Esophagus muscularis mucosa (tissue), 4 donors: ENCODE measurements at regions of chr4 and their contacts with region 1.

Region 1: GRCh38 chr4:119729835-119730670 is 101.4 kb upstream of the PDE5A start:
- DNase-seq: no peak
- H3K4me3 ChIP-seq: no peak overlapping the region
- H3K27ac ChIP-seq: peak overlapping the region; percentile 35 to 84 (median 74)
- H3K4me1 ChIP-seq: peaks cover 49 to 86% (median 79%) of the 10 kb centered on the region in 4 donors
- H3K27me3 ChIP-seq: no peaks in the 10 kb centered on the region
- CTCF ChIP-seq: no peak
- EP300 ChIP-seq: no peak
- POLR2A ChIP-seq: no peak

Region 2: GRCh38 chr4:119080716-119081541 is 649.1 kb before region 1 on chr4:
- intact Hi-C with region 1: no loop called
- DNase-seq: no peak
- H3K4me3 ChIP-seq: no peak overlapping the region
- H3K27ac ChIP-seq: no peak overlapping the region
- H3K4me1 ChIP-seq: no peaks in the 10 kb centered on the region
- H3K27me3 ChIP-seq: no peaks in the 10 kb centered on the region
- CTCF ChIP-seq: no peak
- EP300 ChIP-seq: no peak
- POLR2A ChIP-seq: no peak

Region 3: GRCh38 chr4:119683518-119683917 is 46.5 kb before region 1 on chr4:
- intact Hi-C with region 1: loop called (anchors 5 kb)
- DNase-seq: no peak
- H3K4me3 ChIP-seq: no peak overlapping the region
- H3K27ac ChIP-seq: peak overlapping the region; percentile 48 to 74 (median 67)
- H3K4me1 ChIP-seq: peaks cover 0 to 63% (median 55%) of the 10 kb centered on the region in 4 donors
- H3K27me3 ChIP-seq: no peaks in the 10 kb centered on the region
- CTCF ChIP-seq: no peak
- EP300 ChIP-seq: no peak
- POLR2A ChIP-seq: no peak